IMR-90 (cell line): ENCODE measurements at regions of chr15 and their contacts with region 1.

Region 1: GRCh38 chr15:69535101-69535638 is 82.6 kb downstream of the RPLP1 start:
- DNase-seq: peak; percentile 70
- ATAC-seq: peak; percentile 84
- H3K4me3 ChIP-seq: no peak overlapping the region
- H3K27ac ChIP-seq: no peak overlapping the region
- H3K4me1 ChIP-seq: peaks cover 9% of the 10 kb centered on the region
- H3K27me3 ChIP-seq: peaks cover 37% of the 10 kb centered on the region
- CTCF ChIP-seq: no peak
- POLR2A ChIP-seq: no peak
- RAD21 ChIP-seq: no peak

Region 2: GRCh38 chr15:69410290-69410874 is 124.8 kb before region 1 on chr15:
- CTCF ChIA-PET with region 1: no interaction called
- POLR2A ChIA-PET with region 1: no interaction called
- dilution Hi-C with region 1: no loop called
- in situ Hi-C with region 1: no loop called
- intact Hi-C with region 1: no loop called
- DNase-seq: peak; percentile 31
- ATAC-seq: 0 out of 2 replicates have a peak, but pooled peaks have one; percentile 5
- H3K4me3 ChIP-seq: no peak overlapping the region
- H3K27ac ChIP-seq: no peak overlapping the region
- H3K4me1 ChIP-seq: peaks cover 9% of the 10 kb centered on the region
- H3K27me3 ChIP-seq: no peaks in the 10 kb centered on the region
- CTCF ChIP-seq: peak; percentile 45
- POLR2A ChIP-seq: no peak
- RAD21 ChIP-seq: peak; percentile 58

Region 3: GRCh38 chr15:69452692-69453521 is 82.3 kb before region 1 on chr15 and contains the start of gene RPLP1:
- CTCF ChIA-PET with region 1: no interaction called
- POLR2A ChIA-PET with region 1: no interaction called
- dilution Hi-C with region 1: no loop called
- in situ Hi-C with region 1: no loop called
- intact Hi-C with region 1: no loop called
- DNase-seq: peak; percentile 94
- ATAC-seq: peak; percentile 93
- H3K4me3 ChIP-seq: peak within 1 kb of the TSS; percentile 70
- H3K27ac ChIP-seq: peak within 1 kb of the TSS; percentile 80
- H3K4me1 ChIP-seq: peaks cover 13% of the 10 kb centered on the region
- H3K27me3 ChIP-seq: no peaks in the 10 kb centered on the region
- CTCF ChIP-seq: no peak
- POLR2A ChIP-seq: peak; percentile 99
- RAD21 ChIP-seq: no peak
- total RNA-seq, gene RPLP1: 97.0 and 132 TPM in 2 replicates

Region 4: DNA sequence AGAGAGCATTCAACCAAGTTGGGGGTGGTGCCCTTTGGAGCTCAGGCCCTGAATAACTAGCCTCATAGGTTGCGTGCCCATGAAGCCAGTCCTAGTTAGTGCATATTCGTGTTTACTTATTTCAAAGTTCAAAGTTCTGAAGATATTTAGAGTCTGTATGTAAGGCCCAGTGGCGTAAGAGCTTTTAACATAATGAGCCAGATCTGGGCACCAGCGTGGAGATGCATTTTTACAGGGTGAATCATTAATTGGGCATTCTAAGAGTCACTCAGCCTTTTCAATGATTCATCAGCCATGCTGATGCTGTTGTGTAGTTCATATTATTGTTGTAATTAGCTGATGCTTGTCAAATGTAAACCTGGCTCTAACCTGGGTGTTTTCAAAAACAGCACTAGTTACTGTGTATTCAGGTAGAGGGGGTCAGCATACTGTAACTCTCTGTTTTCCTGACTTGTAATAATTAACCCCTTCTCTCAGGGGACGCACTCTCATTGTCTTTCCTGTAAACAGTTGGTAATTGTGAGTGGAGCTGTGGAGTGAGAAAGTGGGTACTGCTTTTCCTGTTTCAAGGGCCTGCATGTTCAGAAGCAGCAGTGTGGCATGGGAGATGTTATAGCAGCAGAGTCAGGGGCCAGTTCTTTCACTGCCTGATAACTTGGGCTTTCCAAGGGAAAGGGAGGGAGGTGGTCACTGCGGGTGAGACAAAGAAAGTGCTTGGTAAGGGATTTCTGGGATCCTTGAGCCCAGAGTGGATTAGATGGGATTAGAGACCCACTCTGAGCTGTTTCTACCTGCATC is 22.4 kb after region 1 on chr15:
- CTCF ChIA-PET with region 1: no interaction called
- POLR2A ChIA-PET with region 1: no interaction called
- dilution Hi-C with region 1: no loop called
- in situ Hi-C with region 1: no loop called
- intact Hi-C with region 1: loop called (anchors 2 kb)
- DNase-seq: peak; percentile 94
- ATAC-seq: peak; percentile 92
- H3K4me3 ChIP-seq: no peak overlapping the region
- H3K27ac ChIP-seq: peak overlapping the region; percentile 70
- H3K4me1 ChIP-seq: peaks cover 18% of the 10 kb centered on the region
- H3K27me3 ChIP-seq: peaks cover 21% of the 10 kb centered on the region
- CTCF ChIP-seq: no peak
- POLR2A ChIP-seq: no peak
- RAD21 ChIP-seq: no peak